PC-3 (cell line): ENCODE measurements at regions of chr17 and their contacts with region 1.

Region 1: DNA sequence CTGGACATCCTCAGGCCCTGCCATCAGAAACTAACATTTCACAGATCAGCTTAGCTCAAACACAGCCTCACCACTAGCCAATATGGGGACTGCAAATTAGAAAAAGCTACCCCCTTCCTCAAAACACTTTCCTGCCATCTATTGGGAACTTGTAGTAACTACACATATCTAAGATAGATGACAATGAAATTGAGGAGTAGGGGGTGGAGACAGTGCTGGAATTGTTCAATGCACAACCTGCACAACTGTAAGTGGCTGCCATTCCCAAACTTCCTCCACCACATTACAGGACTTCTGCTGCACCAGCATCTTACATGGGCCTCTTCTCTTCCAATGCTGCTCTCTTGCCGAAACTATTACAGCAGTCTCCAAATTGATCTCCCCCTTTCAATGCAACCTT is 21.9 kb downstream of the AIPL1 start:
- DNase-seq: peak; percentile 73
- ATAC-seq: peak; percentile 67
- H3K4me3 ChIP-seq: no peak overlapping the region
- H3K27ac ChIP-seq: no peak overlapping the region
- H3K4me1 ChIP-seq: no peaks in the 10 kb centered on the region
- H3K27me3 ChIP-seq: no peaks in the 10 kb centered on the region; the same call in 1 of the 2 replicates
- CTCF ChIP-seq: peak; percentile 70

Region 2: DNA sequence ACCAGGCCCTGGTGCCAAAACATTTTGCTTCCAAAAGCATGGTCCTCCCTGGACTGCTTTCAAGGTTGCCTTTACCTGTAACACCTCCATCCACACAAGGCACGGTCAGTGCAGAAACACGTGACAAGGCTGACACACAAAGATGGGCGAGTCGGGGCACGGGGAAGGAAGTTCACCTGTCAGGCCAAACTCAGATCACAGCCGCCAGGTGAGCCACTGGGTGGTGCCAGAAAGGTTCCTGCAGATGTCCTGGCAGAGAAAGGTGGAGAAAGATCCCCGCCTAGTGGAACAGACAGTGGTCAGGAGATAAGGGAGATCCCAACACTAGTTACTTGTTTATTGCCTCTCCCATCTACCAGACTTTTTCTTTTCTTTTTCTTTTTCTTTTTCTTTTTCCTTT is 133.4 kb before region 1 on chr17:
- CTCF ChIA-PET with region 1: no interaction called
- POLR2A ChIA-PET with region 1: no interaction called
- intact Hi-C with region 1: loop called (anchors 2 kb)
- DNase-seq: peak; percentile 87
- ATAC-seq: peak; percentile 79
- H3K4me3 ChIP-seq: no peak overlapping the region
- H3K27ac ChIP-seq: no peak overlapping the region
- H3K4me1 ChIP-seq: peaks cover 4% of the 10 kb centered on the region; the same call in 1 of the 2 replicates
- H3K27me3 ChIP-seq: no peaks in the 10 kb centered on the region
- CTCF ChIP-seq: peak; percentile 80

Region 3: DNA sequence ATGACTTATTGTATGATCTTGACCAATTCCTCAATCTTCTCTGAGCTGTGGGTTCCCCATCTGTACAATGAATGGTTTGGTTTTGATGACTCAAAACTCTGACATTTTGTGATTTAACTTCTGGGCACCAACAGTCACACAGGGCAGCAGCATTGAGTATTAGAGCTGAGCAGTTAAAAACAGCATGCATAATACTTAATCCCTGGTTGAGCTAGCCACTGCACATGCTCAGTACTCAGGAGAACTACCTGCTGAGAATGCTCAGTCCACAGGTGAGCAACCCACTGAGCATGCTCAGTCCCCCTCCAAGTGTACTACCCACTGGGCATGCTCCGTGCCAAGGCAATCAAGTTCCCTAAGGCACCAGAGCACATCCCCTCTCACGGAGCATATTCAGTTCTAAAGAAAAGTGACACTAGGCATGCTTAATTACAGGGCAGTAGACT is 46.8 kb before region 1 on chr17:
- CTCF ChIA-PET with region 1: no interaction called
- POLR2A ChIA-PET with region 1: no interaction called
- intact Hi-C with region 1: loop called (anchors 1 kb)
- DNase-seq: peak; percentile 75
- ATAC-seq: peak; percentile 53
- H3K4me3 ChIP-seq: peak overlapping the region; percentile 48
- H3K27ac ChIP-seq: peak overlapping the region; percentile 98
- H3K4me1 ChIP-seq: peaks cover 25% of the 10 kb centered on the region
- H3K27me3 ChIP-seq: no peaks in the 10 kb centered on the region
- CTCF ChIP-seq: no peak